ENCODE measurements at regions of chr5 and their contacts with region 1.

Region 1: DNA sequence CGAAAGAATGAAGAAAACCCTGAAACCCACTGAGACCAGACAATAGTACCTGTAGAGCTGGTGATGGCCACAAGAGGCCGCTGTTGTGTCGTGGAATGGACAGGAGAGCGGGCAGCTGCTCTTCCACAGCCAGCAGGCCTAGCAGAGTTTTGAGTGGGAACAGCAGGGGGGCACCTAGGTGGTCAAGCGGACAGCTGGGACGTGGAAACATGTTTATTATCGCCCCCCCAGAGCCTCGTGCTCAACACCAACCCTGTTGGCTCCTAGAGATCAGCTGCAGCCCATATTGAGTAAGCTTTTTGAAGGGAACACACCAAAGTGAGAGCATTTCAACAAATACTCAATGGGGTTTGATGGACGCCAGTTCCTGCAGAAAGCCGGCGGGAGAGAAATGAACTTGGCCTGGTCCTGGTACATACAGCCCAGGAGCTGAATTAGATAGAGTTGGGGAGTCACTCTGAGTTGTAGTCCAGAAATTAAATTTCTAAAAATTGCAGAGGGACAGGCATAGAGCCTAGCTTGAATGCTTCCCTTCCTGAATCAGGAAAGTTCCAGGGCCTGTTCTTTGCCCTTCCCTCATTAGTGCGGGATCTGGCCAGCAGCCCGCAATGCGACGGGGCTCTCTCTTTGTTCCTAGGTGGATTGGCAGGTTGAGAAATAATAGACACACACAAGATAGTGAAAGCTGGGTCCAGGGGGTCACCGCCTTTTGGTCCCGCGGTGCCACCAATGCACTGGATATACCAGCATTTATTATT is 33.8 kb downstream of the MFAP3 start:
- DNase-seq: peak; percentile 46 to 83 (median 73)
- ATAC-seq: peak; percentile 92
- H3K4me3 ChIP-seq: no peak overlapping the region
- H3K4me3 Mint-ChIP-seq: peak overlapping the region in 2 of 10 donors; percentile 55 to 61
- H3K27ac ChIP-seq: no peak overlapping the region
- H3K27ac Mint-ChIP-seq: peak overlapping the region in 5 of 9 donors; percentile 19 to 63 (median 48)
- H3K4me1 ChIP-seq: peaks cover 0 to 13% of the 10 kb centered on the region in 2 donors
- H3K4me1 Mint-ChIP-seq: peaks cover 7 to 61% (median 34%) of the 10 kb centered on the region in 7 donors
- H3K27me3 ChIP-seq: no peaks in the 10 kb centered on the region
- H3K27me3 Mint-ChIP-seq: peaks cover 0 to 9% (median 6%) of the 10 kb centered on the region in 5 donors

Region 2: DNA sequence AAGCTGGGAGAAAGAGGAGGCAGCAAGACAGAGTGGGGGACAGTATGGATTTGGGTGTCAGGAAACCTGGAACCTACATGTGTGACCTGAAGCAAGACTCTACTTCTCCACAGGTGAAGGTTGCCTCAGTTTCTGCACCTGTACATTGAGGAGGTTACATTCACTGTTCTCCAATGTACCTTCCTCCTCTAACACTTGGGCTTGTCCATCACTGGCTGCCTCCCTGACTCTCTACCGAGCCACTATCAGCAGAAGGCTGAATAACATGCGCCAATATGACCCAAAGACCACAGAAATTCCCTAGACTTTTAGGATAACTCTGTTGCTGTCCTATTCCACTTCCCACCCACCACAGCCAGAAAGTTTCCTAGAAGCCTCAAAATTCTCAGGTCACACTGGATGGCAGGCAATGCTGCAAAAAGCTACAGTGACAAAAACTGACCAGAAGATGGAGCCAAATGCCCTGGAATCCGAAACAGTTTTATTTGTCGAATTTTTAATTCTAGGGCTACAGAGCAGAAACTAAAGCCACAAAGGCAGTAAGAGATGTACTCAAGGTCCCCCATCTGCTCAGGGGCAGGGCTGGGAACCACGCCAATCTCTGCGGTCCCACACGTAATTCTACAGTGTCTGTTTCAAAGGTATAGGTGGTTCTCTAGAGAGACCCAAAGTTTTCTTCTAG is 98.3 kb before region 1 on chr5:
- CTCF ChIA-PET with region 1: interaction called, 4 read pairs
- POLR2A ChIA-PET with region 1: no interaction called
- intact Hi-C with region 1: loop called (anchors 5 to 10 kb)
- DNase-seq: peak in 5 of 9 donors; percentile 29 to 49 (median 33)
- ATAC-seq: peak; percentile 47
- H3K4me3 ChIP-seq: no peak overlapping the region
- H3K4me3 Mint-ChIP-seq: no peak overlapping the region
- H3K27ac ChIP-seq: no peak overlapping the region
- H3K27ac Mint-ChIP-seq: no peak overlapping the region
- H3K4me1 ChIP-seq: no peaks in the 10 kb centered on the region
- H3K4me1 Mint-ChIP-seq: no peaks in the 10 kb centered on the region
- H3K27me3 ChIP-seq: no peaks in the 10 kb centered on the region
- H3K27me3 Mint-ChIP-seq: peaks cover 3 to 21% (median 11%) of the 10 kb centered on the region in 5 donors

Region 3: GRCh38 chr5:154087257-154087656 is 14.7 kb after region 1 on chr5:
- CTCF ChIA-PET with region 1: interaction called, 5 read pairs
- POLR2A ChIA-PET with region 1: no interaction called
- intact Hi-C with region 1: loop called in 1 of 2 experiments (anchors 2 kb)
- DNase-seq: no peak
- ATAC-seq: no peak
- H3K4me3 ChIP-seq: no peak overlapping the region
- H3K4me3 Mint-ChIP-seq: no peak overlapping the region
- H3K27ac ChIP-seq: no peak overlapping the region
- H3K27ac Mint-ChIP-seq: no peak overlapping the region
- H3K4me1 ChIP-seq: no peaks in the 10 kb centered on the region
- H3K4me1 Mint-ChIP-seq: peaks cover 0 to 18% (median 10%) of the 10 kb centered on the region in 7 donors
- H3K27me3 ChIP-seq: no peaks in the 10 kb centered on the region
- H3K27me3 Mint-ChIP-seq: peaks cover 9 to 17% (median 13%) of the 10 kb centered on the region in 5 donors

Region 4: GRCh38 chr5:154189819-154190594 is 117.4 kb after region 1 on chr5:
- CTCF ChIA-PET with region 1: interaction called, 4 read pairs
- POLR2A ChIA-PET with region 1: interaction called, 3 read pairs
- intact Hi-C with region 1: loop called (anchors 2 kb)
- DNase-seq: peak; percentile 63 to 82 (median 79)
- ATAC-seq: peak; percentile 93
- H3K4me3 ChIP-seq: peak overlapping the region; percentile 94
- H3K4me3 Mint-ChIP-seq: peak overlapping the region; percentile 82 to 93 (median 88)
- H3K27ac ChIP-seq: peak overlapping the region; percentile 80
- H3K27ac Mint-ChIP-seq: peak overlapping the region; percentile 71 to 83 (median 78)
- H3K4me1 ChIP-seq: peaks cover 16 to 22% of the 10 kb centered on the region in 2 donors
- H3K4me1 Mint-ChIP-seq: peaks cover 33 to 49% (median 41%) of the 10 kb centered on the region in 7 donors
- H3K27me3 ChIP-seq: no peaks in the 10 kb centered on the region
- H3K27me3 Mint-ChIP-seq: peaks cover 0 to 12% (median 0%) of the 10 kb centered on the region in 5 donors

Region 5: DNA sequence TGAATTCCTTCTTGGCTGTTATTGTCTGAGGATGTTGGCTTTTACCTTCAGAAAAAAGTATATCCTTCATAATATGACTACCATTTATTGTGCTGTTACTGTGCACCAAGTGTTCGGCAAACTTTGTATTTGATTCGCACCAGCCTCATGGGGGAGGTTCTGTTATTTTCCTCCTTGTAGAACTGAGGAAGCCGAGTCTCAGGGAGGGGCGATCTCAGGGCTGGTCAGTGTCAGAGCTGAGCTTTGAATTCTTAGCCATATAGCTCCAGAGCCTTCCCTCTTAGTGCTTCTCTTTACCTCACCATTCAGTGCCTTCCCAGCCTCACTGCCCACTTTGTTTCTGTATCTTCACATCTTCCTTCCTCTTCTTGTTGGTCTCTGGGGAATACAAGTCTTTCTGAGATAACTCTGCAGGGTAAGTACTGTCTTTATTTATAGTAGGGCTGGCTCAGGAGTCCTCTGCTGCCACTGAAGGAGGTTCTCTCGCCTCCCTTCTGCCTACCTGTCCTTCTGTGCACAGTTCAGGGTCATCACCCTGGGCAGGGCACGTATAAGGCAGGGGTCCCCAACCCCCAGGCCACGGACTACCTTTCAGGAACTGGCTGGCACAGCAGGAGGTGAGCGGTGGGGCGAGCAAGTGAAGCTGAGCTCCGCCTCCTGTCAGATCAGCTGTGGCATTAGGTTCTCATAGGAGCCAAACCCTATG is 166.3 kb after region 1 on chr5:
- CTCF ChIA-PET with region 1: interaction called, 4 read pairs
- POLR2A ChIA-PET with region 1: no interaction called
- intact Hi-C with region 1: loop called (anchors 1 to 2 kb)
- DNase-seq: no peak
- ATAC-seq: peak; percentile 20
- H3K4me3 ChIP-seq: no peak overlapping the region
- H3K4me3 Mint-ChIP-seq: no peak overlapping the region
- H3K27ac ChIP-seq: no peak overlapping the region
- H3K27ac Mint-ChIP-seq: peak overlapping the region in 1 of 9 donors; percentile 28
- H3K4me1 ChIP-seq: no peaks in the 10 kb centered on the region
- H3K4me1 Mint-ChIP-seq: peaks cover 14 to 58% (median 33%) of the 10 kb centered on the region in 7 donors
- H3K27me3 ChIP-seq: no peaks in the 10 kb centered on the region
- H3K27me3 Mint-ChIP-seq: no peaks in the 10 kb centered on the region

Region 6: GRCh38 chr5:154445422-154446182 is 373.0 kb after region 1 on chr5 and contains the start of gene SAP30L:
- CTCF ChIA-PET with region 1: no interaction called
- POLR2A ChIA-PET with region 1: no interaction called
- intact Hi-C with region 1: loop called (anchors 1 kb)
- DNase-seq: peak; percentile 92 to 99 (median 97)
- ATAC-seq: peak; percentile 97
- H3K4me3 ChIP-seq: peak within 1 kb of the TSS; percentile 90
- H3K4me3 Mint-ChIP-seq: peak within 1 kb of the TSS; percentile 94 to 100 (median 99)
- H3K27ac ChIP-seq: peak within 1 kb of the TSS; percentile 83
- H3K27ac Mint-ChIP-seq: peak within 1 kb of the TSS; percentile 88 to 98 (median 95)
- H3K4me1 ChIP-seq: peaks cover 16 to 35% of the 10 kb centered on the region in 2 donors
- H3K4me1 Mint-ChIP-seq: peaks cover 32 to 74% (median 61%) of the 10 kb centered on the region in 7 donors
- H3K27me3 ChIP-seq: no peaks in the 10 kb centered on the region
- H3K27me3 Mint-ChIP-seq: no peaks in the 10 kb centered on the region
- total RNA-seq, gene SAP30L: 31.1 to 45.7 (median 35.9) TPM

Region 7: DNA sequence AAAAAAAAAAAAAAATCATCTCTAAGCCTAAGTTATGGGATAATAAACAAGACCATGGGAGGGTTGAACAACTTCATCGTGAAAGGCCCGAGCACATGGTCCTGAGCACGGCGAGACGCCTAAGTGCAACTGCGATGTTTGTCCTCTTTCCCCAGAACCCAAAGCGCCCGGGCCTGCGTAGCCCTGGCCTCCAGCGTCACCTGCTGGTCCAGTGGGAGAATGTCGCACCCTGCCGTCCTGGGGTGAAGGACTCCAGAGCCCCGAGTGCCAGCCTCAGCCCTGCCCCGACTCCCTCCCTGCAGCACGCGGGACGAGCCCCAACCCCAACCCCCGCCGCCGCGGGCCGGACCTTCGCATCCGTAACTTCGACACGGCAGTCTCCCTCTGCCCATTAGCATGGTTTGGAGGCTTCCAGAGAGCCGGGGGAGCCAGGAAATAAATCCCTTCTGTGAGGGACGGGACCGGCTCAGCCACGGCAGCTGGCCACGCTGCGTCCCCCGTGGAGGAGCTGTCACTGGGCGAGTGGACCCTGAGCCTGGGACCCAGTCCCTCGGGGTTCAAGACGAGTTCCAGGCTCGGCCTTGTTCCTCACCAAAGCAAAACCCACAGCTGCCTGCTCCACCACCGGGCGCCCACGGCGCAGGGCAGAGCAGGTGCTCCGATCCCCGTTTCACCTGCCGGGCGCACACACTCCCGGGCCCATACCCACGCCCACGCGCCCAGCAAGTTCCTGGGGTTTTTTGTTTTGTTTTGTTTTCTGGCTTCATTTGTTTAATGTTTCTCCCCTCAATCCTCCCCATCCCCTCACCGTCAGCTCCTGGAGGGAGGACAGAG is 537.9 kb after region 1 on chr5:
- CTCF ChIA-PET with region 1: no interaction called
- POLR2A ChIA-PET with region 1: no interaction called
- intact Hi-C with region 1: loop called in 1 of 2 experiments (anchors 10 kb)
- DNase-seq: peak in 7 of 9 donors; percentile 8 to 73 (median 21)
- ATAC-seq: peak; percentile 76
- H3K4me3 ChIP-seq: no peak overlapping the region
- H3K4me3 Mint-ChIP-seq: peak overlapping the region in 7 of 10 donors; percentile 35 to 71 (median 65)
- H3K27ac ChIP-seq: no peak overlapping the region
- H3K27ac Mint-ChIP-seq: no peak overlapping the region
- H3K4me1 ChIP-seq: no peaks in the 10 kb centered on the region
- H3K4me1 Mint-ChIP-seq: peaks cover 0 to 18% (median 14%) of the 10 kb centered on the region in 7 donors
- H3K27me3 ChIP-seq: no peaks in the 10 kb centered on the region
- H3K27me3 Mint-ChIP-seq: peaks cover 34 to 70% (median 66%) of the 10 kb centered on the region in 5 donors

Region 8: GRCh38 chr5:154663424-154663823 is 590.8 kb after region 1 on chr5:
- CTCF ChIA-PET with region 1: no interaction called
- POLR2A ChIA-PET with region 1: no interaction called
- intact Hi-C with region 1: no loop called
- DNase-seq: no peak
- ATAC-seq: no peak
- H3K4me3 ChIP-seq: no peak overlapping the region
- H3K4me3 Mint-ChIP-seq: no peak overlapping the region
- H3K27ac ChIP-seq: no peak overlapping the region
- H3K27ac Mint-ChIP-seq: no peak overlapping the region
- H3K4me1 ChIP-seq: no peaks in the 10 kb centered on the region
- H3K4me1 Mint-ChIP-seq: no peaks in the 10 kb centered on the region
- H3K27me3 ChIP-seq: no peaks in the 10 kb centered on the region
- H3K27me3 Mint-ChIP-seq: peaks cover 0 to 3% (median 0%) of the 10 kb centered on the region in 5 donors

Measured in naive thymus-derived CD4-positive, alpha-beta T cell (primary cell).